IMR-90 (cell line): ENCODE measurements at regions of chr6 and their contacts with region 1.

Region 1: GRCh38 chr6:115613488-115613887 is 447.2 kb downstream of the FRK start:
- DNase-seq: peak; percentile 94
- ATAC-seq: peak; percentile 89
- H3K4me3 ChIP-seq: no peak overlapping the region
- H3K27ac ChIP-seq: no peak overlapping the region
- H3K4me1 ChIP-seq: peaks cover 4% of the 10 kb centered on the region
- H3K27me3 ChIP-seq: no peaks in the 10 kb centered on the region
- CTCF ChIP-seq: no peak
- POLR2A ChIP-seq: no peak
- RAD21 ChIP-seq: no peak

Region 2: GRCh38 chr6:115570331-115570730 is 43.2 kb before region 1 on chr6:
- CTCF ChIA-PET with region 1: no interaction called
- POLR2A ChIA-PET with region 1: no interaction called
- dilution Hi-C with region 1: no loop called
- in situ Hi-C with region 1: no loop called
- intact Hi-C with region 1: loop called (anchors 1 kb)
- DNase-seq: peak; percentile 59
- ATAC-seq: peak; percentile 93
- H3K4me3 ChIP-seq: no peak overlapping the region
- H3K27ac ChIP-seq: peak overlapping the region; percentile 40; the same call in 1 of the 2 replicates
- H3K4me1 ChIP-seq: peaks cover 4% of the 10 kb centered on the region; the same call in 1 of the 2 replicates
- H3K27me3 ChIP-seq: no peaks in the 10 kb centered on the region
- CTCF ChIP-seq: no peak
- POLR2A ChIP-seq: no peak
- RAD21 ChIP-seq: no peak